Activated CD4-positive, alpha-beta T cell treated with anti-CD3 and anti-CD28 coated beads for 36 hours (primary cell): ENCODE measurements at regions of chr3 and their contacts with region 1.

Region 1: GRCh38 chr3:143119009-143119914 is at the start of gene CHST2:
- DNase-seq: peak; percentile 86
- ATAC-seq: peak; percentile 88
- H3K4me3 Mint-ChIP-seq: peak within 1 kb of the TSS; percentile 80
- H3K27ac Mint-ChIP-seq: peak within 1 kb of the TSS; percentile 67
- H3K4me1 Mint-ChIP-seq: peaks cover 27% of the 10 kb centered on the region
- H3K27me3 Mint-ChIP-seq: peaks cover 2% of the 10 kb centered on the region
- total RNA-seq, gene CHST2: 5.1 to 6.8 TPM

Region 2: GRCh38 chr3:143001369-143002082 is 117.7 kb before region 1 on chr3 and contains the start of gene U2SURP:
- CTCF ChIA-PET with region 1: no interaction called
- POLR2A ChIA-PET with region 1: no interaction called
- intact Hi-C with region 1: loop called in 1 of 2 experiments (anchors 1 kb)
- DNase-seq: peak; percentile 96
- ATAC-seq: peak; percentile 86
- H3K4me3 Mint-ChIP-seq: peak within 1 kb of the TSS; percentile 91
- H3K27ac Mint-ChIP-seq: peak within 1 kb of the TSS; percentile 99
- H3K4me1 Mint-ChIP-seq: peaks cover 40% of the 10 kb centered on the region
- H3K27me3 Mint-ChIP-seq: no peaks in the 10 kb centered on the region
- total RNA-seq, gene U2SURP: 208 to 248 TPM

Region 3: DNA sequence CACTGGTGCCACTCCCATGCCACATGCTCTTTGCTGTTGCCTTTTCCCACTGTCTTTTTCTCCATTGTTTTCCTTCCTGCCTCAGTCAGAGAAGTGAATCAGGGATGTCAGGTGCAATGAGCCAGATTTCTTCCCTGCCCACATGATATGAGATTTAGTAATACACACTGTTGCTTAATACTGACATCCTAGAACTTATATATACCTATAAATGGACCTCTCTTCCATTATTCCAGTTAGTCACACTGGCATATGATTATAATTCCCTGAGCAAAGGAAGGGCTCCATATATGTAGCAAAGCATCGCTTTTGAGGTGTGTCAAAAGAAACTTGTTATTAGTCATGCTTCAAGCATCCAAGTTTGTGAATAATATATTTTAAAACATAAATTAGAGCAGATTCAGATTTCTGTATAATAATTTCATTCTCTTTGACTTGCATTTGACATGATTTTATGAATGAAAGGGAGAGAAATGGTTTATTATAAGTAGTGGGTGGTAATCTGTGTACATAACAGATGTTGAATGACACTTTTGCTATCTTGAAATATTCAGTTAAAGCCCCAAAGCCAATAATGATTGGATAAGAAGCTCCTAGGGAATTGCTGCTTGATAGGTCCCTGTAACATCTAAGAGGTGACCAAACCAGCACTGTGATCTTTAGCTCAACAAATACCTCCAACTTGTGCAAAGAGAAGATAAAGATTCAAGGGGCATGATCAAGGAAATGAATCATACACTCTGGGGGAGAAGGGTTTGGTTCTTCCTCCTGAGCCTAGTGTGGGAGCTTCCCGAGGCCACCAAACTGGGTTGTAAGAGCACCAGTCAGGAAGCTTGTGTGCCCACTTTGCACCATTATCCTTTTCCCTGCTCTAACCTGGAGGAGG is 49.0 kb after region 1 on chr3:
- CTCF ChIA-PET with region 1: interaction called, 4 read pairs
- POLR2A ChIA-PET with region 1: no interaction called
- intact Hi-C with region 1: loop called (anchors 1 to 2 kb)
- DNase-seq: no peak
- ATAC-seq: no peak
- H3K4me3 Mint-ChIP-seq: no peak overlapping the region
- H3K27ac Mint-ChIP-seq: peak overlapping the region; percentile 34
- H3K4me1 Mint-ChIP-seq: peaks cover 86% of the 10 kb centered on the region
- H3K27me3 Mint-ChIP-seq: no peaks in the 10 kb centered on the region

Region 4: GRCh38 chr3:143302638-143303171 is 183.4 kb after region 1 on chr3:
- CTCF ChIA-PET with region 1: interaction called, 3 read pairs
- POLR2A ChIA-PET with region 1: no interaction called
- intact Hi-C with region 1: loop called in 1 of 2 experiments (anchors 2 kb)
- DNase-seq: no peak
- ATAC-seq: no peak
- H3K4me3 Mint-ChIP-seq: no peak overlapping the region
- H3K27ac Mint-ChIP-seq: no peak overlapping the region
- H3K4me1 Mint-ChIP-seq: peaks cover 14% of the 10 kb centered on the region
- H3K27me3 Mint-ChIP-seq: no peaks in the 10 kb centered on the region

Region 5: GRCh38 chr3:143421556-143421955 is 302.3 kb after region 1 on chr3:
- CTCF ChIA-PET with region 1: no interaction called
- POLR2A ChIA-PET with region 1: no interaction called
- intact Hi-C with region 1: loop called in 1 of 2 experiments (anchors 5 kb)
- DNase-seq: no peak
- ATAC-seq: no peak
- H3K4me3 Mint-ChIP-seq: no peak overlapping the region
- H3K27ac Mint-ChIP-seq: no peak overlapping the region
- H3K4me1 Mint-ChIP-seq: peaks cover 12% of the 10 kb centered on the region
- H3K27me3 Mint-ChIP-seq: no peaks in the 10 kb centered on the region

Region 6: GRCh38 chr3:143644370-143645089 is 525.3 kb after region 1 on chr3:
- CTCF ChIA-PET with region 1: no interaction called
- POLR2A ChIA-PET with region 1: no interaction called
- intact Hi-C with region 1: loop called (anchors 1 to 10 kb)
- DNase-seq: peak; percentile 45
- ATAC-seq: peak; percentile 33
- H3K4me3 Mint-ChIP-seq: no peak overlapping the region
- H3K27ac Mint-ChIP-seq: no peak overlapping the region
- H3K4me1 Mint-ChIP-seq: no peaks in the 10 kb centered on the region
- H3K27me3 Mint-ChIP-seq: no peaks in the 10 kb centered on the region

Region 7: GRCh38 chr3:143775459-143775858 is 656.2 kb after region 1 on chr3:
- CTCF ChIA-PET with region 1: no interaction called
- POLR2A ChIA-PET with region 1: no interaction called
- intact Hi-C with region 1: loop called in 1 of 2 experiments (anchors 10 kb)
- DNase-seq: peak; percentile 14
- ATAC-seq: peak; percentile 82
- H3K4me3 Mint-ChIP-seq: no peak overlapping the region
- H3K27ac Mint-ChIP-seq: no peak overlapping the region
- H3K4me1 Mint-ChIP-seq: peaks cover 3% of the 10 kb centered on the region
- H3K27me3 Mint-ChIP-seq: no peaks in the 10 kb centered on the region

Region 8: DNA sequence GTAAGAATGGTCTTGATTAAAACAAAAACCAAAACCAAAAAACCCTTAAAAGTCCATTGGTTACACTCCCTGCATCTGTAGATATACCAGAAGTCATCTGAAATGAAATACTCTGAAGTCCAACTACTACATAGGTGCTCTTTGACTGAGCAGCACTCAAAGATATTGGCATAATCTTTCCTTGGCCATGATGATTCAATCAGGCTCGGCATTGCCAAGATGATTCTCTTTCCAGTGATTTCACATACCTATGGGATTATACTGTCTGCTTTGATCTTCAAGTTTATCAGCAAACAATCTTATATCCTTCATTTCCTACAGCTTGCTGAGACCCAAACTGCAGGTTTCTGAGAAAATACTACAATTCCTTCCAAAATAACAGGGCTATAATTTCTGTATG is 816.4 kb after region 1 on chr3:
- CTCF ChIA-PET with region 1: no interaction called
- POLR2A ChIA-PET with region 1: no interaction called
- intact Hi-C with region 1: no loop called
- DNase-seq: no peak
- ATAC-seq: no peak
- H3K4me3 Mint-ChIP-seq: no peak overlapping the region
- H3K27ac Mint-ChIP-seq: no peak overlapping the region
- H3K4me1 Mint-ChIP-seq: no peaks in the 10 kb centered on the region
- H3K27me3 Mint-ChIP-seq: peaks cover 20% of the 10 kb centered on the region